ENCODE measurements at regions of chr5 and their contacts with region 1.

Region 1: DNA sequence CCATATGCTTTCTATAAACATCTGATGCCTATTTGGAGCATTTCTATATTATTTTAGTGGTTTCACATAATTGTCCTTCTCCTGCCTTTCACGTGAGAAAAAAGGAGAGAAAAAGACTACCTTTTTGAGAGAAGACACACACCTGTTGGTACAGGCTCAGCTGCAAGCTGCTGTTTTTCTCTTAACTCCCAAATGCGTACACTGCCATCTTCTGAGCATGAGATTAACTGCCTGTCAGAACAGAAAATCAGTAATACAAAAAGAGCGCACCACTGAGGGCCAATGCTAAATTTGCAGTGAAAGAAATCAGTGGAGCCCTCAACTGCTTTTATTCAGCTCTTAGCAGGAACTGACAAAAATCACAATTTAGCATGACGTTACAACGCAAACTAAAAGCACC is 54.9 kb downstream of the WDR41 start:
- DNase-seq: no peak
- ATAC-seq: 0 out of 3 replicates have a peak, but pooled peaks have one; percentile 40
- H3K4me3 ChIP-seq: no peak overlapping the region
- H3K27ac ChIP-seq: no peak overlapping the region
- H3K4me1 ChIP-seq: no peaks in the 10 kb centered on the region
- H3K27me3 ChIP-seq: no peaks in the 10 kb centered on the region
- CTCF ChIP-seq: peak in 2 of 3 experiments; percentile 15 to 51; a peak in 2 of 6 replicates
- EP300 ChIP-seq: no peak
- POLR2A ChIP-seq: no peak
- RAD21 ChIP-seq: peak; percentile 63

Region 2: GRCh38 chr5:77143998-77144836 is 293.0 kb before region 1 on chr5:
- CTCF ChIA-PET with region 1: interaction called, 27 read pairs
- POLR2A ChIA-PET with region 1: no interaction called
- RAD21 ChIA-PET with region 1: interaction called, 9 read pairs
- SMC1A ChIA-PET with region 1: interaction called, 9 read pairs
- in situ Hi-C with region 1: no loop called
- intact Hi-C with region 1: loop called (anchors 1 kb)
- DNase-seq: peak; percentile 13
- ATAC-seq: peak; percentile 92
- H3K4me3 ChIP-seq: no peak overlapping the region
- H3K27ac ChIP-seq: no peak overlapping the region
- H3K4me1 ChIP-seq: no peaks in the 10 kb centered on the region
- H3K27me3 ChIP-seq: no peaks in the 10 kb centered on the region
- CTCF ChIP-seq: peak; percentile 78 to 90 (median 84)
- EP300 ChIP-seq: no peak
- POLR2A ChIP-seq: no peak
- RAD21 ChIP-seq: peak; percentile 90

Region 3: GRCh38 chr5:77328930-77329647 is 108.1 kb before region 1 on chr5:
- CTCF ChIA-PET with region 1: no interaction called
- POLR2A ChIA-PET with region 1: no interaction called
- RAD21 ChIA-PET with region 1: no interaction called
- SMC1A ChIA-PET with region 1: no interaction called
- in situ Hi-C with region 1: no loop called
- intact Hi-C with region 1: no loop called
- DNase-seq: no peak
- ATAC-seq: no peak
- H3K4me3 ChIP-seq: no peak overlapping the region
- H3K27ac ChIP-seq: no peak overlapping the region
- H3K4me1 ChIP-seq: no peaks in the 10 kb centered on the region
- H3K27me3 ChIP-seq: peaks cover 0 to 1% of the 10 kb centered on the region in 2 experiments; a peak in 2 of 4 replicates
- CTCF ChIP-seq: no peak
- EP300 ChIP-seq: no peak
- POLR2A ChIP-seq: no peak
- RAD21 ChIP-seq: no peak

Region 4: GRCh38 chr5:77426670-77427069 is 10.5 kb before region 1 on chr5:
- CTCF ChIA-PET with region 1: interaction called, 14 read pairs
- POLR2A ChIA-PET with region 1: interaction called, 3 read pairs
- RAD21 ChIA-PET with region 1: interaction called, 7 read pairs
- SMC1A ChIA-PET with region 1: interaction called, 21 read pairs
- in situ Hi-C with region 1: no loop called
- intact Hi-C with region 1: no loop called
- DNase-seq: no peak
- ATAC-seq: no peak
- H3K4me3 ChIP-seq: no peak overlapping the region
- H3K27ac ChIP-seq: no peak overlapping the region
- H3K4me1 ChIP-seq: no peaks in the 10 kb centered on the region
- H3K27me3 ChIP-seq: no peaks in the 10 kb centered on the region
- CTCF ChIP-seq: no peak
- EP300 ChIP-seq: no peak
- POLR2A ChIP-seq: no peak
- RAD21 ChIP-seq: no peak